OCI-LY7 (cell line): ENCODE measurements at regions of chr13 and their contacts with region 1.

Region 1: DNA sequence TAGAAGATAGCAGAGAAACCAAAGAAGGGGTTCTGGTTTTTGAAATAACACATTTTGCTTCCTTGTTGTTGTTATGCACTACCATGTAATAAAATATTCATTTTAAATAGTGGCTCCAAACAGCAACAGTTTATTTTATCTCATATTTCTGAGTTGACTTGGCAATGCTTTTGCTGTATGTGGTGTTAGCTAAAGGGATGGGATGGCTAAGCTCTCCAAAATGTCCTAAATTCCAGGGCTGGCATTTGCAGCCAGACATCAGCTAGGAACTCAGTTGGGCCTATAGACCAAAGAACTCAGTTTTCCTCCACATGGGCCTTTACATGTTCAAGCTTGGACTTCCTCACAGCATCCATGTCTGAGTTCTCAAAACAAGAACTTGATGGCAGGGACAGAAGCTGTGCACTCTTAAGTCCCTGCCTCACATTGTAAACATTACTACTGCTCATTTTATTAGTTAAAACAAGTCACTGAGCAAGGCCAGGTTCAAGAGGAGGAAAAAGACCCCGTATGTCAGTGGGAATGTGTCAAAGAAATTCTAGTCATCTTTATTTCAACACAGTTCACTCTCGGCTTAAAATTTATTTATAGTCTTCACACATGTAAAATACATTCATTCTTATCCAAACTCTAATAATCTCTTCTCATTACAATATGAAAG is 819.3 kb upstream of the PCDH20 start:
- DNase-seq: no peak
- H3K4me3 ChIP-seq: no peak overlapping the region
- H3K27ac ChIP-seq: no peak overlapping the region
- H3K4me1 ChIP-seq: peaks cover 5% of the 10 kb centered on the region
- CTCF ChIP-seq: no peak

Region 2: DNA sequence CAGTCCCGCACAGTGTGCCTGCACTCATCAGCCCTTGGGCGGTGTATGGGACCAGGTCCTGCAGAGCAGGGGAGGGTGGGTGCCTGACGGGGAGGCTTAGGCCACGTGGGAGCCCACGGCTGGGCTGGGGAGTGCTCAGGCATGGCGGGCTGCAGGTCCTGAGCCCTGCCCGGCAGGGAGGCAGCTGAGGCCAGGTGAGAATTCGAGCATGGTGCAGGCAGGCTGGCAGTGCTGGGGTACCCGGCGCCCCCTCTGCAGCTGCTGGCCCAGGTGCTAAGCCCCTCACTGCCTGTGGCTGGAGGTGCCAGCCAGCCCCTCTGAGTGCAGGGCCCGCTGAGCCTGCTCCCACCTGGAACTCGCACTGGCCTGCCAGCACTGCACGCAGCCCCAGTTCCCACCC is 188.4 kb before region 1 on chr13:
- CTCF ChIA-PET with region 1: no interaction called
- POLR2A ChIA-PET with region 1: no interaction called
- intact Hi-C with region 1: no loop called
- DNase-seq: no peak
- H3K4me3 ChIP-seq: no peak overlapping the region
- H3K27ac ChIP-seq: no peak overlapping the region
- H3K4me1 ChIP-seq: no peaks in the 10 kb centered on the region
- CTCF ChIP-seq: no peak

Region 3: DNA sequence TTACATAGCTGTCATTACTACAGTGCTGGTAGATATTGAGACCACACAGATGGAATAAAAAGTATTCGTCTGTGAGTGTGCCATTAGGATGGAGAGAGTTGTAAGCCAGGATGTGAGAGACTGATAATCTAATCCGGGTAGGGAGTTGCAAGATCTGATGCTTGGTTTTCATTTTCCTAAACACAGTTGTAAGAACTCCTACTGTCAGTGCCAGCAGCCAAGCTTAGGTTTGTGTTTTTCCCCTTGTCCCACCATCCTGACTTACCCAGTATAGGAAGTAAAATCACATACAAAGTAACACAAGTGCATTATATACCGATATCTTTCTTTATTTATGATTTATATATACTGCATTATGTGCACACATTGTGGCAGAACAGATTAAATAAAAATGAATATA is 92.9 kb before region 1 on chr13:
- CTCF ChIA-PET with region 1: no interaction called
- POLR2A ChIA-PET with region 1: no interaction called
- intact Hi-C with region 1: no loop called
- DNase-seq: no peak
- H3K4me3 ChIP-seq: no peak overlapping the region
- H3K27ac ChIP-seq: no peak overlapping the region
- H3K4me1 ChIP-seq: peaks cover 9% of the 10 kb centered on the region
- CTCF ChIP-seq: no peak

Region 4: GRCh38 chr13:62246581-62246980 is 11.7 kb after region 1 on chr13:
- CTCF ChIA-PET with region 1: no interaction called
- POLR2A ChIA-PET with region 1: interaction called, 11 read pairs
- intact Hi-C with region 1: no loop called
- DNase-seq: no peak
- H3K4me3 ChIP-seq: no peak overlapping the region
- H3K27ac ChIP-seq: no peak overlapping the region
- H3K4me1 ChIP-seq: no peaks in the 10 kb centered on the region
- CTCF ChIP-seq: no peak

Region 5: DNA sequence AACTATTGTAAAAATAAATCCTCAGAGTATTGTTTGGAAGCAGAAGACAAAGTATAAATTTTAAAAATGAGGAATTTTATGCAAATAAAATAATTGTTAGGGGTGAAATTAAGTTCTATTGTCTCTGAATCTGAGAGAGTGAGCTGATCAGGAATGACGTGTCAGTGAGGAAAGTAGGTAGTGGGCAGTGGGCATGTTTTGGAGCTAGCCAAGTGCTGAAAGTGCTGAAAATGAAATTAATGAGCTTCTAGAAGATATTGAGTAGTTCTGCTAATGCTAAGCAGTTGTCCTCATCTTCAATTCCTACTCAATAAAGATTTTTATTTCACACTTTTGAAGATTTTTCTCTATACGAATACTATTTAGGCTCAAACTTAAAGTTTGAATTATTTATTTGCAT is 348.6 kb after region 1 on chr13:
- CTCF ChIA-PET with region 1: no interaction called
- POLR2A ChIA-PET with region 1: no interaction called
- intact Hi-C with region 1: no loop called
- DNase-seq: no peak
- H3K4me3 ChIP-seq: no peak overlapping the region
- H3K27ac ChIP-seq: no peak overlapping the region
- H3K4me1 ChIP-seq: no peaks in the 10 kb centered on the region
- CTCF ChIP-seq: no peak

Region 6: GRCh38 chr13:62643007-62643483 is 408.1 kb after region 1 on chr13:
- CTCF ChIA-PET with region 1: no interaction called
- POLR2A ChIA-PET with region 1: no interaction called
- intact Hi-C with region 1: no loop called
- DNase-seq: no peak
- H3K4me3 ChIP-seq: peak overlapping the region; percentile 55
- H3K27ac ChIP-seq: peak overlapping the region; percentile 93
- H3K4me1 ChIP-seq: peaks cover 41% of the 10 kb centered on the region
- CTCF ChIP-seq: no peak